Endothelial cell of umbilical vein (primary cell): ENCODE measurements at regions of chr3 and their contacts with region 1.

Region 1: DNA sequence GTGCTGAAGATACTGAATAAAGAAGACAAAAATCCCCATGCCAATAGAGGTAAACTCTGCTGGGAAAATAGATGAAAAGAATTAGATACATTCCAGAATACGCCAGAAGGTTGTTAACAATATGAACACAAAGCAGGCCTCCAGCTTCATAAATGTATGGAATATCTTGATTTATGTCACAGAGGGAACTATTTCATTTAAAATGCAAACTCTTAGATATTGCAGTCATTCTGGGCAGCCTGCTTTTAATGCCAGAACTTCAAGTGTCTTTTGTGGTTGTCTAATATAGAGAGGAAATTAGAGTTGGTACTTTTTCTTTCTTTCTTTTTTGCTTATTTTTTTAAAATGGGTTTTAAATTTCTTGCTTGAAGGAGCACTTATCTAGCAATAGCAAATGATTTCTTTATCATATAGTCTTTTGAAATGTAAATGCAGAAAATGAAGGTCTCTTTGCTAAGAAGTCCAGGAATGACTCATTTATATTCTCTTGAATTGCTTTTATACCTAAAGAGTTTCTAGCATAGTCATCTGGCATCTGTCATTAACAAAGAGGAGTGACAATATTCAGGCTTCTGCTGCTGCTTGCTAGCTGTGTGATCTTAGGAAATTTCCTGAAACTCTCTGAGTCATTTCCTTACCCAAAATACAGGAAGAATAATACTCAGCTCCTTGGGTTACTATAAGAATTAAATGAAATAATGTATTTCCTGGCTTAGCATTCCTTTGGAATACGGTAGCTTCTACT is 527.5 kb downstream of the DIPK2A start:
- DNase-seq: peak; percentile 72
- H3K4me3 ChIP-seq: no peak overlapping the region
- H3K27ac ChIP-seq: peak overlapping the region; percentile 35
- H3K4me1 ChIP-seq: peaks cover 13% of the 10 kb centered on the region
- H3K27me3 ChIP-seq: no peaks in the 10 kb centered on the region
- CTCF ChIP-seq: no peak
- POLR2A ChIP-seq: no peak

Region 2: DNA sequence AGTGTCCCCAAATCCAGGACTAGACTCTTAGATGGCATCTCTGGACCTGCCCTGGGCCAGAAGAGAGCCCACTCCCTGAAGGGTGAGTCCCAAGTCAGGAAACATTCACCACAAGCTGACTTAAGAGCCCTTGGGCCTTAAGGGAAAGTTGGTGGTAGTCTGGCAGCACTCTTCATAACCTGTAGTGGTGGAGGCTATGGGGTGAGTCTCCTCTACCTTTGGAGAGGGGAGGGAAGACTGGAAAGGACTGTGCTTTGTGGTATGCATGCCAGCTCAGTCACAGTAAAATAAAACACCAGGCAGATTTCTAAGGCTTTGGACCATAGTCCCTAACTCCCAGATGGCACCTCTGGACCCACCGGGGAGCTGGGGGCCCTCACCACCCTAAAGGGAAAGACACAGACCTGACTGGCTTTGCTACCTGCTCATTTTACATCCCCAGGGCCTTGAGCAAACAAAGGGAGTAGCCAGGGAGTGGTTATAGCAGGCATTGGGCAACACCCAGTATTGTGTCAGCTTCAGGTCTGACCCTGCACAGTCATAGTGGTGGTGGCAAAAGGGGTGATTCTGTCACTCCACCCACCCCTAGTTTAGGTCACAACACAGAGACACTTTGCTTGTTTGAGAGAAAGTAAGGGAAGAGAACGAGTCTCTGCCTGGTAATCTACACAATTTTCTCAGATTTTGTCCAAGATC is 175.2 kb before region 1 on chr3:
- CTCF ChIA-PET with region 1: no interaction called
- POLR2A ChIA-PET with region 1: no interaction called
- dilution Hi-C with region 1: no loop called
- intact Hi-C with region 1: no loop called
- DNase-seq: no peak
- H3K4me3 ChIP-seq: no peak overlapping the region
- H3K27ac ChIP-seq: no peak overlapping the region
- H3K4me1 ChIP-seq: no peaks in the 10 kb centered on the region
- H3K27me3 ChIP-seq: no peaks in the 10 kb centered on the region
- CTCF ChIP-seq: no peak
- POLR2A ChIP-seq: no peak

Region 3: DNA sequence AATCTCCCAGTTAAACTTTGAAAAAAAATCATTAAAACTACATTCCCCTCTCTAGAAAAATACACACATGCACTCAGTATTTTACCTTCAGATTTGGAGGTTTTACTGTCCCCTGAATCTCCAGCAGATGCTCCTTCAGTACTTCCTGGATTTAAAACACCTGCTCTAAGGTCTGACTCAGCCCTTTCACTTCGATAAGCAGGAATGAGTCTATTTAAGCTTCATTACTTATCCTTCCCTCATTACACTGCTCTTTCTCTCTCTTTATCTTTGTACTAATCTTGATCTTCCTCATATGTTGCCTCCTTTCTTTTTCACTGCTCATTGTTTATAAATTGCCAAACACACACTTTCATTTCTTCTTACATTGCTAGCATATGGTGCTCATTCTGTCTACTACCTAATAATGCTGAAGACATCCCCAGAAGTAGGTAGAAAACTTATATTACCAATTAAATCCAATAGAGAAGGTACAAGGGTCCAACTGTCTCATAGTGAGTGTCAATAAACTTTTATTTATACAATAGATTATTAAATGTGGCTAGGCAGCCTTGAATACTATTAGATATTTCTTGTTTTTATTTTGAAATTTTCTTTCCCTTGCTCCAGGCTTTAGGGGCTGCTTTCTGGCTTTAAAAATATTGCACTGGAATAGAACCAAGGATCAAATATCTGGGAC is 83.5 kb before region 1 on chr3:
- CTCF ChIA-PET with region 1: no interaction called
- POLR2A ChIA-PET with region 1: no interaction called
- dilution Hi-C with region 1: no loop called
- intact Hi-C with region 1: no loop called
- DNase-seq: no peak
- H3K4me3 ChIP-seq: no peak overlapping the region
- H3K27ac ChIP-seq: no peak overlapping the region
- H3K4me1 ChIP-seq: no peaks in the 10 kb centered on the region
- H3K27me3 ChIP-seq: no peaks in the 10 kb centered on the region
- CTCF ChIP-seq: no peak
- POLR2A ChIP-seq: no peak

Region 4: DNA sequence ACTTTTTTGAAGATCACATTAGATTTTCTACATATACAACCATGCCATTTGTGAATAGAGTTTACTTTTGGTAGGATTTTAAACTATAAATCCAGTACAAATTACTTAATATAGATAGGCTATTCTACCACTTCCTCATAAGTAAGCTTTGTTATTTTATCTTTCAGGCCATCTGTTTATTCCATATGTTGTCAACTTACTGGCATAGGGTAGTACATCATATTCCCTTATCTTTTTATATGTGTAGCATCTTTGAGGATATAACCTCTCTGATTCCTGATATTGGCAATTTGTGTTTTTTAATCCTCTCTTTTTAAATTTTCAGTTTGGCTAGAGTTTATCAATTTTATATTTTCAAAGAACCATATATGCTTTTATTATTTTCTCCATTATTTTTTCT is 12.2 kb before region 1 on chr3:
- CTCF ChIA-PET with region 1: interaction called, 12 read pairs
- POLR2A ChIA-PET with region 1: no interaction called
- dilution Hi-C with region 1: no loop called
- intact Hi-C with region 1: no loop called
- DNase-seq: no peak
- H3K4me3 ChIP-seq: no peak overlapping the region
- H3K27ac ChIP-seq: no peak overlapping the region
- H3K4me1 ChIP-seq: no peaks in the 10 kb centered on the region
- H3K27me3 ChIP-seq: no peaks in the 10 kb centered on the region
- CTCF ChIP-seq: no peak
- POLR2A ChIP-seq: no peak

Region 5: GRCh38 chr3:144590854-144591253 is 91.7 kb after region 1 on chr3:
- CTCF ChIA-PET with region 1: no interaction called
- POLR2A ChIA-PET with region 1: no interaction called
- dilution Hi-C with region 1: no loop called
- intact Hi-C with region 1: loop called (anchors 2 kb)
- DNase-seq: peak; percentile 90
- H3K4me3 ChIP-seq: peak overlapping the region in 1 of 3 experiments; percentile 14
- H3K27ac ChIP-seq: peak overlapping the region; percentile 69
- H3K4me1 ChIP-seq: peaks cover 37% of the 10 kb centered on the region
- H3K27me3 ChIP-seq: no peaks in the 10 kb centered on the region
- CTCF ChIP-seq: no peak
- POLR2A ChIP-seq: no peak